Stomach (tissue), 19 donors: ENCODE measurements at regions of chr1 and their contacts with region 1.

Region 1: GRCh38 chr1:6646499-6647148 is 22.0 kb downstream of the THAP3 start:
- DNase-seq: peak; percentile 34 to 73
- H3K4me3 ChIP-seq: no peak overlapping the region
- H3K27ac ChIP-seq: no peak overlapping the region
- H3K4me1 ChIP-seq: no peaks in the 10 kb centered on the region
- H3K27me3 ChIP-seq: no peaks in the 10 kb centered on the region
- CTCF ChIP-seq: peak in 5 of 7 experiments; percentile 23 to 61 (median 53)
- EP300 ChIP-seq: no peak
- POLR2A ChIP-seq: no peak

Region 2: DNA sequence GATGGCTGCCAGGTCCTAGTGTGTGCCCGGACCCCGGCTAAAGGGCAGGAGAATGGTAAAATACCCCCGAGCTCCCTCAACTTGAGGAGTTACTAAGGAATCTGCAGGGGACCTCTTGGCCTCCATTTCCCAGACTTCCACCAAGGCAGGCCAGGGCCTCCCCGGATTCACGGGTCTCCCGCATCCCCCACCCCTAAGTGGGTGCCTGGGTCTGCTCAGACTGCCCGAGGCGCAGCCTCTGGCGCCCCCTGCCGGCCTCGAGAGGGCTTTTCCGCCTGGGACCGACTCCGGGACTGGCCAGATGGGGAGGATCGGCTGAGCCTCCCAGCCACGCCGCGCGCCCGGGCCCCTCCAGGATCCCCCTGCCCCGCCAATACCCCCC is 156.8 kb before region 1 on chr1:
- intact Hi-C with region 1: loop called (anchors 5 kb)
- DNase-seq: peak; percentile 79 to 93
- H3K4me3 ChIP-seq: peak overlapping the region; percentile 65 to 84 (median 68)
- H3K27ac ChIP-seq: peak overlapping the region in 4 of 5 donors; percentile 83 to 88 (median 86)
- H3K4me1 ChIP-seq: peaks cover 29 to 64% (median 49%) of the 10 kb centered on the region in 4 donors
- H3K27me3 ChIP-seq: peaks cover 0 to 44% (median 29%) of the 10 kb centered on the region in 3 donors
- CTCF ChIP-seq: peak in 5 of 7 experiments; percentile 70 to 92 (median 85)
- EP300 ChIP-seq: no peak
- POLR2A ChIP-seq: no peak